ENCODE measurements at regions of chr9 and their contacts with region 1.

Region 1: DNA sequence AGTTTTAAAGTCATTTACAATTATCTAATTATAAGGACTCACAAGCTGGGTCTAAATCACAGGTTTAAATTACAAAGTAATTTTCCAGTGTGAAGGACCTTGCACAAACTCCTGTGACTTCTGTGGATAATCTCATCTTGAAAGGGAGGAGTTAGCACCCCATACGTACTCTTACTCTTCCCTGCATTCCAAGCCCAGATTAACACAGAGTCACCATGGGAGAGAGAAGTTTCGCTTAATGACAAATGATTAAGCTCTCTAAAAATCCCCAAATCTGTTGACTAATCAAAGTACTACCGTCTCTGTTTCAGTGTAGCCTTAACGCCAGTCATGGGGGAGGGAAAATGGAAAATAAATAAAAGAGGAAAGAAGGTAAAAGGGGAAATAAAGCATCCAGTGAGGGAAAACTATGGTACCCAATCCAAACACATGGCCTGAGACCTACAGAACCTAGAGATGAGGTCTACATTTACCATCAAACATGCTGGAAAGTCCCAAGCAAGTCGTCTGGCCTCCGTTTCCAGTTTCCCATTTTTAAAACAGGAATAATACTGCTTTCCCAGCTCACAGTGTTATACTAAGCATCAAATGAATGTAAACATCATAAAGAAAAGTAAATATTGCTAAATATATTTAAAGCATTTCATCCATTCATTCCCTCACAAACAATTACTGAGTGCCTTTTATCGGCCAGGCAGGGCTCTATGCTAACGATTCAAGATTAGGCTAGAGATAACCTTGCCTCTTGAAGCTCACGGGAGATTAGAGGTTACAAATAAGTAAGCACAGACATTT is 63.2 kb downstream of the PCA3 start:
- DNase-seq: no peak
- ATAC-seq: no peak
- H3K4me3 ChIP-seq: no peak overlapping the region
- H3K4me3 Mint-ChIP-seq: no peak overlapping the region
- H3K27ac ChIP-seq: no peak overlapping the region
- H3K27ac Mint-ChIP-seq: no peak overlapping the region
- H3K4me1 ChIP-seq: no peaks in the 10 kb centered on the region
- H3K4me1 Mint-ChIP-seq: no peaks in the 10 kb centered on the region
- H3K27me3 ChIP-seq: peaks cover 0 to 2% of the 10 kb centered on the region in 2 experiments
- H3K27me3 Mint-ChIP-seq: peaks cover 6 to 20% of the 10 kb centered on the region in 2 donors

Region 2: DNA sequence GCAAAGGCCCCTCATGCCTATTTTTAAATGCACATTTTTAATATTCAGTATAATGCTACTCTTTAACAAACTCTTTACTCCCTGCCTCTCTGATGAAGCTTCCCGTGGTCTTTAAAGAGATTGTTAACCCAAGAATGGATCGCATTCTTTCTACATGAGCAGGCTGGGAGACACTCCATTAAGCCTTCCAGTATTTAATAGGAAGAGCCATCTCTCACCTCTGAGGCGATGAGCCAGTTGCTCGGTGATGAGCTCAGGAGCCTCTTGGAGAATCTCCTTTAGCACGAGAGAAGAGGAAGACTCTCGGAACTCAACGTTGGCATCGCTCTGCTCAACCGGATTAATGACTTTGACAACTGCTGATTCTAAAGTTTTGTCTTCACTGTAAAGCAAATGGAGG is 18.8 kb after region 1 on chr9:
- CTCF ChIA-PET with region 1: interaction called in 1 of 2 experiments, 10 read pairs
- POLR2A ChIA-PET with region 1: no interaction called
- DNase-seq: no peak
- ATAC-seq: no peak
- H3K4me3 ChIP-seq: no peak overlapping the region
- H3K4me3 Mint-ChIP-seq: no peak overlapping the region
- H3K27ac ChIP-seq: no peak overlapping the region
- H3K27ac Mint-ChIP-seq: no peak overlapping the region
- H3K4me1 ChIP-seq: no peaks in the 10 kb centered on the region
- H3K4me1 Mint-ChIP-seq: no peaks in the 10 kb centered on the region
- H3K27me3 ChIP-seq: no peaks in the 10 kb centered on the region
- H3K27me3 Mint-ChIP-seq: peaks cover 3 to 4% of the 10 kb centered on the region in 2 donors

Region 3: GRCh38 chr9:76893395-76893932 is 66.0 kb after region 1 on chr9:
- CTCF ChIA-PET with region 1: no interaction called
- POLR2A ChIA-PET with region 1: no interaction called
- DNase-seq: no peak
- ATAC-seq: no peak
- H3K4me3 ChIP-seq: no peak overlapping the region
- H3K4me3 Mint-ChIP-seq: no peak overlapping the region
- H3K27ac ChIP-seq: no peak overlapping the region
- H3K27ac Mint-ChIP-seq: no peak overlapping the region
- H3K4me1 ChIP-seq: no peaks in the 10 kb centered on the region
- H3K4me1 Mint-ChIP-seq: no peaks in the 10 kb centered on the region
- H3K27me3 ChIP-seq: peaks cover 0 to 6% of the 10 kb centered on the region in 2 experiments
- H3K27me3 Mint-ChIP-seq: peaks cover 0 to 7% of the 10 kb centered on the region in 2 donors

Measured in T-cell (primary cell).